H1 (cell line): ENCODE measurements at regions of chr19 and their contacts with region 1.

Region 1: DNA sequence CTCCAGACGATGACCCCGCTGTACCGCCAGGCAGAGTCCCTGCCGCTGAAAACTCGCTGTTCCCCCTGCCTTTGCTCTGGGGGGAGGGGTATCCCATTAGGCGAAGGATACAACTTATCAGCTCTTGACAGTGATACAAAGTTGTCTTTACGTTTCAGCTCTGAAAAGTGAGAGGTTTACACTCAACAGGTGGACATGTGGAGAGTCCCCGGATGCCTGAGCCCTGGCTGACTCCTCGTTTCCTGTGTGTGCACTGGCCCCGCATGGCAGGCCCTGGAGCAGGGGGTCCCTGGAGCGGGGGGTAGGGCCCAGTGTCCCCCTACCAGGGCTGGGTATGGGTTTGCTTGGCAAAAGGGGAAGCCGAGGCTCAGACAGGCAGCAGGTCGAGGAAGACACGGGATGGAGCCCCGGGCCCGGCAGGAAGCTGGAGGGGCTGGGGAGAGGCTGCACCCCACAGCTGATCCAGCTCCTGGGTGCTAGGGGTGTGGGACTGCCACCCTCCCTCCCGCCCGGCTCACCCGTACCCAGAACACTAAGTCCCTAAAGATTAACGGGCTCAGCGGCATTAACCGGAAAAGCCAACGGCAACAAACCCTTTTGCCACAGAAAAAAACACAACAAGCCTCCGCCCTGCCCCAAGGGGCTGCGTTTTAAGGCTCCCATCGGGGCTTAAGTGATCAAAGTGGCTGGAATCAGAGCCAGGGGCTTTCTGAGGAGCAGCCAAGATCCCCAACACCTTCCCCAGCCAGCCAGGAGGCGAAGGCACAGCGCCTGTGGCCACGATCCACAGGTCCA is 5.6 kb downstream of the TCF3 start:
- DNase-seq: no peak
- H3K4me3 ChIP-seq: no peak overlapping the region
- H3K27ac ChIP-seq: no peak overlapping the region
- H3K4me1 ChIP-seq: peaks cover 0 to 22% (median 4%) of the 10 kb centered on the region in 4 experiments; a peak in 6 of 7 replicates
- H3K27me3 ChIP-seq: no peaks in the 10 kb centered on the region
- CTCF ChIP-seq: no peak
- EP300 ChIP-seq: no peak
- POLR2A ChIP-seq: 0 out of 3 replicates have a peak, but pooled peaks of 1 of the 2 experiments have one; percentile 1
- RAD21 ChIP-seq: no peak

Region 2: DNA sequence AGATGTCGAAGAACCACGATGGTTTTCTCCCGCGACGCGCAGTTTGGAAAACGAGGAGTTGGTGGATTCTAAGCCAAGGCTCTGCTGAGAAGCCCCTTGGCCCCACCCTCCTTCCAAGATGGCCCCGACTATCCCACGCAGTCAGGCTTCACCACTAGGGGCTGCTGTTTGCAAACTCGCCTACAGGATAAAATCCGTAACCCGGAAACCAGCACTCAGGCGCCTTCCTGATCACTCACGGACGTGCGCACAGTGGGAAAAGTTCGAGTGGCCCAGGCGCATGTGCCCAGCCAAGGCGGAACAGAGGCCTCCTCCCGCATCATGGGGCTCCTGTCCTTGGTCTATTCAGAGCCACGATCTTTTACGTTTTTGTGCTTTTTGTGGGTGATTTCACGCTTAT is 22.4 kb before region 1 on chr19:
- CTCF ChIA-PET with region 1: interaction called, 6 read pairs
- POLR2A ChIA-PET with region 1: interaction called, 11 read pairs
- DNase-seq: peak; percentile 49 to 87
- H3K4me3 ChIP-seq: no peak overlapping the region
- H3K27ac ChIP-seq: no peak overlapping the region
- H3K4me1 ChIP-seq: peaks cover 0 to 8% (median 4%) of the 10 kb centered on the region in 4 experiments; a peak in 3 of 7 replicates
- H3K27me3 ChIP-seq: no peaks in the 10 kb centered on the region
- CTCF ChIP-seq: peak; percentile 89 to 96 (median 96)
- EP300 ChIP-seq: no peak
- POLR2A ChIP-seq: no peak
- RAD21 ChIP-seq: peak; percentile 57 to 73

Region 3: GRCh38 chr19:1632462-1633268 is 14.2 kb before region 1 on chr19:
- CTCF ChIA-PET with region 1: interaction called, 3 read pairs
- POLR2A ChIA-PET with region 1: interaction called, 25 read pairs
- DNase-seq: no peak
- H3K4me3 ChIP-seq: no peak overlapping the region
- H3K27ac ChIP-seq: no peak overlapping the region
- H3K4me1 ChIP-seq: no peaks in the 10 kb centered on the region
- H3K27me3 ChIP-seq: no peaks in the 10 kb centered on the region
- CTCF ChIP-seq: no peak
- EP300 ChIP-seq: no peak
- POLR2A ChIP-seq: no peak
- RAD21 ChIP-seq: no peak

Region 4: GRCh38 chr19:1718420-1719291 is 71.8 kb after region 1 on chr19:
- CTCF ChIA-PET with region 1: no interaction called
- POLR2A ChIA-PET with region 1: no interaction called
- DNase-seq: peak in 1 of 2 experiments; percentile 56
- H3K4me3 ChIP-seq: peak overlapping the region; percentile 23 to 65 (median 34)
- H3K27ac ChIP-seq: no peak overlapping the region
- H3K4me1 ChIP-seq: peaks cover 0 to 13% (median 2%) of the 10 kb centered on the region in 4 experiments; a peak in 4 of 7 replicates
- H3K27me3 ChIP-seq: peaks cover 6 to 22% (median 17%) of the 10 kb centered on the region in 4 experiments; a peak in 5 of 7 replicates
- CTCF ChIP-seq: no peak
- EP300 ChIP-seq: no peak
- POLR2A ChIP-seq: no peak
- RAD21 ChIP-seq: no peak